HEK293 (cell line): ENCODE measurements at regions of chr9 and their contacts with region 1.

Region 1: GRCh38 chr9:38671748-38672147 is 48.2 kb downstream of the FAM240B start:
- H3K4me3 ChIP-seq: no peak overlapping the region
- H3K27ac ChIP-seq: peak overlapping the region; percentile 11; the same call in 1 of the 2 replicates
- H3K4me1 ChIP-seq: peaks cover 3% of the 10 kb centered on the region; the same call in 1 of the 2 replicates
- CTCF ChIP-seq: no peak

Region 2: GRCh38 chr9:38620483-38621433 is 51.0 kb before region 1 on chr9 and contains the start of gene ANKRD18A:
- CTCF ChIA-PET with region 1: interaction called, 10 read pairs
- POLR2A ChIA-PET with region 1: interaction called, 8 read pairs
- H3K4me3 ChIP-seq: peak within 1 kb of the TSS; percentile 66
- H3K27ac ChIP-seq: peak within 1 kb of the TSS; percentile 96
- H3K4me1 ChIP-seq: no peaks in the 10 kb centered on the region
- CTCF ChIP-seq: peak; percentile 87

Region 3: GRCh38 chr9:38682718-38683117 is 11.0 kb after region 1 on chr9:
- CTCF ChIA-PET with region 1: interaction called, 13 read pairs
- POLR2A ChIA-PET with region 1: interaction called, 8 read pairs
- H3K4me3 ChIP-seq: no peak overlapping the region
- H3K27ac ChIP-seq: no peak overlapping the region
- H3K4me1 ChIP-seq: peaks cover 16% of the 10 kb centered on the region
- CTCF ChIP-seq: no peak